ENCODE measurements at regions of chr9 and their contacts with region 1.

Region 1: GRCh38 chr9:99140685-99141314 is 35.9 kb downstream of the TGFBR1 start:
- DNase-seq: peak in 1 of 2 experiments; percentile 46
- H3K4me3 ChIP-seq: no peak overlapping the region
- H3K4me3 Mint-ChIP-seq: no peak overlapping the region
- H3K27ac Mint-ChIP-seq: no peak overlapping the region
- H3K4me1 ChIP-seq: no peaks in the 10 kb centered on the region
- H3K4me1 Mint-ChIP-seq: peaks cover 12% of the 10 kb centered on the region
- H3K27me3 ChIP-seq: no peaks in the 10 kb centered on the region
- H3K27me3 Mint-ChIP-seq: no peaks in the 10 kb centered on the region
- CTCF ChIP-seq: peak; percentile 74 to 94

Region 2: GRCh38 chr9:98848450-98849149 is 292.2 kb before region 1 on chr9:
- CTCF ChIA-PET with region 1: interaction called, 8 read pairs
- POLR2A ChIA-PET with region 1: no interaction called
- intact Hi-C with region 1: loop called (anchors 1 kb)
- DNase-seq: peak; percentile 88
- H3K4me3 ChIP-seq: no peak overlapping the region
- H3K4me3 Mint-ChIP-seq: peak overlapping the region; percentile 41
- H3K27ac Mint-ChIP-seq: no peak overlapping the region
- H3K4me1 ChIP-seq: peaks cover 14% of the 10 kb centered on the region
- H3K4me1 Mint-ChIP-seq: peaks cover 23% of the 10 kb centered on the region
- H3K27me3 ChIP-seq: no peaks in the 10 kb centered on the region
- H3K27me3 Mint-ChIP-seq: no peaks in the 10 kb centered on the region
- CTCF ChIP-seq: peak; percentile 92 to 94

Region 3: GRCh38 chr9:98860871-98861293 is 279.9 kb before region 1 on chr9:
- CTCF ChIA-PET with region 1: no interaction called
- POLR2A ChIA-PET with region 1: no interaction called
- intact Hi-C with region 1: loop called (anchors 5 kb)
- DNase-seq: peak in 1 of 2 experiments; percentile 7
- H3K4me3 ChIP-seq: no peak overlapping the region
- H3K4me3 Mint-ChIP-seq: no peak overlapping the region
- H3K27ac Mint-ChIP-seq: no peak overlapping the region
- H3K4me1 ChIP-seq: no peaks in the 10 kb centered on the region
- H3K4me1 Mint-ChIP-seq: no peaks in the 10 kb centered on the region
- H3K27me3 ChIP-seq: no peaks in the 10 kb centered on the region
- H3K27me3 Mint-ChIP-seq: peaks cover 17% of the 10 kb centered on the region
- CTCF ChIP-seq: no peak

Region 4: DNA sequence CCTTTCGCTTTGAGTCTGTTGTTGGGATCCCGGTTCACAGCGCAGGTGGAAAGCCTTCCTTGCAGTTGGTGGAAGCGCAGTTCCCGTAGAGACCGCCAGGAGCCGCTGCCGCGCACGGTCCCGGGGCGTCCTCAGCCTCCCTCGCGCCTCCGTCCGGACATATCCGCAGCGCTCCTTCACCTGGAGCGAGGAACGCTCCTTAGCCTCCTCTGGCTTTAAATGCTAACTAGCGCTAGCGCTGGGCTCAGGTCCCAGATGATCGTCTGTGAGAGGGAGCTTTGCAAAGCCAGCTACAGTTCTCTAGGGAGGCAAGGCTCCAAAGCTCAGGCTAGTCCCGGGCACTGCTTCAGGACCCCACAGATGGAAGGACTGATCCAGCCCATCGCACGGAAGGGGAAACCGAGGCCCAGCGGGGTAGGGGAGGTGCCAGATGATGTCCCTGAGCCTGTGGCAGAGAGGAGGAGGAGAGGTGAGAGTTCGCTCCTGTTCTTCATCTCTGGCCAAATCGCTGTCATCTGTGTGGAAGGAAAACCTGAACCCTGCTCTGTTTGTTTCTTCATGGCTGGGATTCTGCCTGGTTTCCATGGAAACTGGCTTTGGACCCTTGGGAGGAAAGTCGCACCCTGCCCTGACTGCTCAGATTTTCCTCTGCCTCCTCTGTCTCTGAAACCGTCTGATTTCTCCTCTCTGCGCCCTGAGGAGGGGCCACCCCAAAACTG is 165.6 kb before region 1 on chr9:
- CTCF ChIA-PET with region 1: interaction called, 6 read pairs
- POLR2A ChIA-PET with region 1: no interaction called
- intact Hi-C with region 1: loop called (anchors 1 kb)
- DNase-seq: peak; percentile 80 to 89
- H3K4me3 ChIP-seq: no peak overlapping the region
- H3K4me3 Mint-ChIP-seq: no peak overlapping the region
- H3K27ac Mint-ChIP-seq: no peak overlapping the region
- H3K4me1 ChIP-seq: no peaks in the 10 kb centered on the region
- H3K4me1 Mint-ChIP-seq: no peaks in the 10 kb centered on the region
- H3K27me3 ChIP-seq: peaks cover 2% of the 10 kb centered on the region; the same call in 1 of the 2 replicates
- H3K27me3 Mint-ChIP-seq: peaks cover 17% of the 10 kb centered on the region
- CTCF ChIP-seq: peak; percentile 97 to 98

Region 5: GRCh38 chr9:98998441-98999151 is 142.2 kb before region 1 on chr9:
- CTCF ChIA-PET with region 1: interaction called, 4 read pairs
- POLR2A ChIA-PET with region 1: no interaction called
- intact Hi-C with region 1: loop called (anchors 1 kb)
- DNase-seq: peak; percentile 76 to 79
- H3K4me3 ChIP-seq: no peak overlapping the region
- H3K4me3 Mint-ChIP-seq: no peak overlapping the region
- H3K27ac Mint-ChIP-seq: no peak overlapping the region
- H3K4me1 ChIP-seq: peaks cover 3% of the 10 kb centered on the region; the same call in 1 of the 2 replicates
- H3K4me1 Mint-ChIP-seq: no peaks in the 10 kb centered on the region
- H3K27me3 ChIP-seq: no peaks in the 10 kb centered on the region
- H3K27me3 Mint-ChIP-seq: peaks cover 17% of the 10 kb centered on the region
- CTCF ChIP-seq: peak; percentile 85 to 86

Region 6: GRCh38 chr9:99192786-99193465 is 52.1 kb after region 1 on chr9:
- CTCF ChIA-PET with region 1: no interaction called
- POLR2A ChIA-PET with region 1: no interaction called
- intact Hi-C with region 1: no loop called
- DNase-seq: no peak
- H3K4me3 ChIP-seq: no peak overlapping the region
- H3K4me3 Mint-ChIP-seq: no peak overlapping the region
- H3K27ac Mint-ChIP-seq: no peak overlapping the region
- H3K4me1 ChIP-seq: no peaks in the 10 kb centered on the region
- H3K4me1 Mint-ChIP-seq: no peaks in the 10 kb centered on the region
- H3K27me3 ChIP-seq: no peaks in the 10 kb centered on the region
- H3K27me3 Mint-ChIP-seq: peaks cover 22% of the 10 kb centered on the region
- CTCF ChIP-seq: peak in 1 of 2 experiments; percentile 7

Measured in Caco-2 (cell line).